ENCODE measurements at regions of chr6 and their contacts with region 1.

Region 1: GRCh38 chr6:30711758-30712380 is 5.2 kb downstream of the MDC1 start:
- DNase-seq: no peak
- H3K4me3 ChIP-seq: no peak overlapping the region
- H3K27ac ChIP-seq: no peak overlapping the region
- H3K4me1 ChIP-seq: peaks cover 16% of the 10 kb centered on the region
- H3K27me3 ChIP-seq: no peaks in the 10 kb centered on the region
- CTCF ChIP-seq: no peak

Region 2: GRCh38 chr6:30515932-30516753 is 195.7 kb before region 1 on chr6:
- CTCF ChIA-PET with region 1: no interaction called
- dilution Hi-C with region 1: loop called (anchors 5 kb)
- in situ Hi-C with region 1: no loop called
- intact Hi-C with region 1: no loop called
- DNase-seq: peak; percentile 91
- H3K4me3 ChIP-seq: peak overlapping the region; percentile 48 to 70 (median 48)
- H3K27ac ChIP-seq: peak overlapping the region; percentile 99
- H3K4me1 ChIP-seq: peaks cover 19% of the 10 kb centered on the region
- H3K27me3 ChIP-seq: no peaks in the 10 kb centered on the region
- CTCF ChIP-seq: no peak

Region 3: DNA sequence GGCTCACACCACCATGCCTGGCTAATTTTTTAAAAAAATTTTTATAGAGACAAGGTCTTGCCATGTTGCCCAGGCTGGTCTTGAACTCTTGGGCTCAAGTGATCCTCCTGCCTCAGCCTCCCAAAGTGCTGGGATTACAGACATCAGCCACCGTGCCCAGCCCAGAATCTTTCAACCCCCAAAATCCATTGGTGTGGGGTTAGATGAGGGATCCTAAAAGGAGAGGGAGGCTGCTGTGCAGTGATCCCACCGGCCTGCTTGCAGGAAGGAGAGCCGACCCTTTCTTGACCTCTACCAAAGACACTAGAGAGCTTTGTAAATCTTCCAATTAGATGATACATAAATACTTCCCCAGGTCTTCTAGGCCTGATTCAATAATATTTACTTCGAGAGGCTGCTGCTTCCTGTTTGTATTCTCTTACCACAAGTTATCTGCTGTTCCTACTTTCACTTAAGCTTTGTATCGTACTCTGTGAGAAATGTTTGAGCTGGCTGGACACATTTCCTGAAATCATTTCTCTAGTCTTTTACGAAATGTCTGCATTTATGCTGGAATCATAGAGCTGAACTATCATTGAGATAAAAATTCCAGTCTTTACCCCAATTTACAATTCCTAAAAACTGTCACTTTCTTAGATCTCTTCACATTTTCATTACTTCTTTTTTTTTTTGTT is 81.8 kb after region 1 on chr6:
- CTCF ChIA-PET with region 1: no interaction called
- dilution Hi-C with region 1: no loop called
- in situ Hi-C with region 1: no loop called
- intact Hi-C with region 1: no loop called
- DNase-seq: no peak
- H3K4me3 ChIP-seq: no peak overlapping the region
- H3K27ac ChIP-seq: no peak overlapping the region
- H3K4me1 ChIP-seq: peaks cover 11% of the 10 kb centered on the region
- H3K27me3 ChIP-seq: no peaks in the 10 kb centered on the region
- CTCF ChIP-seq: no peak

Region 4: GRCh38 chr6:30814136-30815040 is 102.5 kb after region 1 on chr6:
- CTCF ChIA-PET with region 1: no interaction called
- dilution Hi-C with region 1: no loop called
- in situ Hi-C with region 1: no loop called
- intact Hi-C with region 1: no loop called
- DNase-seq: peak; percentile 88
- H3K4me3 ChIP-seq: no peak overlapping the region
- H3K27ac ChIP-seq: peak overlapping the region; percentile 72
- H3K4me1 ChIP-seq: peaks cover 51% of the 10 kb centered on the region
- H3K27me3 ChIP-seq: no peaks in the 10 kb centered on the region
- CTCF ChIP-seq: no peak